ENCODE measurements at regions of chr15 and their contacts with region 1.

Region 1: DNA sequence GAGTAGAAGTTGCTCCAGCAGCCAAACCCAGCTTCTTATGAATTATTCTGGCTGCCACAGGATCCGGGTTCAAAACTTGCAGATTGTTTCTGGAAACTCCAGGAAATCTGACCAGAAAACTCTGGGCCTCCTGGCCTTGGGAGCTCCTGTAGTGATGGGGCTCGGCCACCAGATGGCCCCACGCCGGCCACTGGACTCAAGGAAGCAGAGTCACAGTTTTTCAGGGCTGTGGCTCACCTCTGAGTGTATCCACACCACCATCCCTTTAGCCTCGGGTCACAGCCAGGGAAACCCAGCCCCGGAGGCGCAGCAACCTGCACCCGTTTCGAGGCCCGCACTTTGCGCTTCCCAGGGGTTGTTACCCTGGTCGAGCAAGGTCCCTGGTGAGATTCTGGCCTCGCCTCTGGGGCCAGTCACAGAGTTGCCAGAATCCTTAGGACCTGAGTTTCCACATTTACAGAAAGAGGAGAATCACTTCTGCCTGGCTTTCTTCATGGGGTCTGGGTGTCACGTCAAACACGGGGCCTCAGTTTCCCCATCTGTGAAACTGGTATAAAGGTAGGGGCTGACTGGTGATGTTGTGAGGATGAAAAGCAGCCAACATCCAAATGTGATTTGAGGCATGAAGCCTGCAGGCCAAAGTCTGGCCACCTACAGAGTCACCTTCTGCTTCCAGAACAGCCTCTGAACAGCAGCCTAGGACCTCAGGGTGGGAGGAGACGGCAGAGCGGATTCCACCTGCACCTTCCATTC is 53.5 kb upstream of the LCTL start:
- DNase-seq: peak; percentile 56
- ATAC-seq: peak; percentile 51
- H3K4me3 ChIP-seq: no peak overlapping the region
- H3K4me3 Mint-ChIP-seq: no peak overlapping the region
- H3K27ac ChIP-seq: no peak overlapping the region
- H3K27ac Mint-ChIP-seq: no peak overlapping the region
- H3K4me1 ChIP-seq: peaks cover 25 to 28% of the 10 kb centered on the region in 2 donors
- H3K4me1 Mint-ChIP-seq: peaks cover 31% of the 10 kb centered on the region
- H3K27me3 ChIP-seq: peaks cover 0 to 31% (median 15%) of the 10 kb centered on the region in 4 experiments
- H3K27me3 Mint-ChIP-seq: peaks cover 33% of the 10 kb centered on the region
- CTCF ChIP-seq: peak; percentile 73

Region 2: GRCh38 chr15:66497502-66498455 is 121.5 kb before region 1 on chr15 and contains the start of gene SNAPC5:
- CTCF ChIA-PET with region 1: no interaction called
- POLR2A ChIA-PET with region 1: no interaction called
- intact Hi-C with region 1: no loop called
- DNase-seq: peak; percentile 97
- ATAC-seq: peak; percentile 93
- H3K4me3 ChIP-seq: peak within 1 kb of the TSS; percentile 88 to 94 (median 89)
- H3K4me3 Mint-ChIP-seq: peak within 1 kb of the TSS; percentile 94
- H3K27ac ChIP-seq: peak within 1 kb of the TSS; percentile 95 to 96
- H3K27ac Mint-ChIP-seq: peak within 1 kb of the TSS; percentile 93
- H3K4me1 ChIP-seq: peaks cover 17 to 27% of the 10 kb centered on the region in 2 donors
- H3K4me1 Mint-ChIP-seq: peaks cover 33% of the 10 kb centered on the region
- H3K27me3 ChIP-seq: no peaks in the 10 kb centered on the region
- H3K27me3 Mint-ChIP-seq: no peaks in the 10 kb centered on the region
- CTCF ChIP-seq: peak; percentile 99
- total RNA-seq, gene SNAPC5: 28.5 and 29.9 TPM in 2 replicates

Region 3: GRCh38 chr15:66588537-66588936 is 30.8 kb before region 1 on chr15:
- CTCF ChIA-PET with region 1: interaction called, 4 read pairs
- POLR2A ChIA-PET with region 1: no interaction called
- intact Hi-C with region 1: loop called (anchors 1 kb)
- DNase-seq: no peak
- ATAC-seq: no peak
- H3K4me3 ChIP-seq: no peak overlapping the region
- H3K4me3 Mint-ChIP-seq: no peak overlapping the region
- H3K27ac ChIP-seq: no peak overlapping the region
- H3K27ac Mint-ChIP-seq: no peak overlapping the region
- H3K4me1 ChIP-seq: no peaks in the 10 kb centered on the region
- H3K4me1 Mint-ChIP-seq: no peaks in the 10 kb centered on the region
- H3K27me3 ChIP-seq: peaks cover 0 to 19% (median 6%) of the 10 kb centered on the region in 4 experiments
- H3K27me3 Mint-ChIP-seq: peaks cover 16% of the 10 kb centered on the region
- CTCF ChIP-seq: no peak

Region 4: GRCh38 chr15:66700802-66701421 is 81.6 kb after region 1 on chr15:
- CTCF ChIA-PET with region 1: interaction called, 7 read pairs
- POLR2A ChIA-PET with region 1: no interaction called
- intact Hi-C with region 1: loop called (anchors 5 kb)
- DNase-seq: peak; percentile 88
- ATAC-seq: peak; percentile 84
- H3K4me3 ChIP-seq: peak overlapping the region; percentile 63 to 80 (median 77)
- H3K4me3 Mint-ChIP-seq: peak overlapping the region; percentile 94
- H3K27ac ChIP-seq: peak overlapping the region in 1 of 2 donors; percentile 47
- H3K27ac Mint-ChIP-seq: peak overlapping the region; percentile 85
- H3K4me1 ChIP-seq: peaks cover 17 to 27% of the 10 kb centered on the region in 2 donors
- H3K4me1 Mint-ChIP-seq: peaks cover 19% of the 10 kb centered on the region
- H3K27me3 ChIP-seq: peaks cover 0 to 34% (median 7%) of the 10 kb centered on the region in 4 experiments
- H3K27me3 Mint-ChIP-seq: peaks cover 17% of the 10 kb centered on the region
- CTCF ChIP-seq: no peak

Region 5: DNA sequence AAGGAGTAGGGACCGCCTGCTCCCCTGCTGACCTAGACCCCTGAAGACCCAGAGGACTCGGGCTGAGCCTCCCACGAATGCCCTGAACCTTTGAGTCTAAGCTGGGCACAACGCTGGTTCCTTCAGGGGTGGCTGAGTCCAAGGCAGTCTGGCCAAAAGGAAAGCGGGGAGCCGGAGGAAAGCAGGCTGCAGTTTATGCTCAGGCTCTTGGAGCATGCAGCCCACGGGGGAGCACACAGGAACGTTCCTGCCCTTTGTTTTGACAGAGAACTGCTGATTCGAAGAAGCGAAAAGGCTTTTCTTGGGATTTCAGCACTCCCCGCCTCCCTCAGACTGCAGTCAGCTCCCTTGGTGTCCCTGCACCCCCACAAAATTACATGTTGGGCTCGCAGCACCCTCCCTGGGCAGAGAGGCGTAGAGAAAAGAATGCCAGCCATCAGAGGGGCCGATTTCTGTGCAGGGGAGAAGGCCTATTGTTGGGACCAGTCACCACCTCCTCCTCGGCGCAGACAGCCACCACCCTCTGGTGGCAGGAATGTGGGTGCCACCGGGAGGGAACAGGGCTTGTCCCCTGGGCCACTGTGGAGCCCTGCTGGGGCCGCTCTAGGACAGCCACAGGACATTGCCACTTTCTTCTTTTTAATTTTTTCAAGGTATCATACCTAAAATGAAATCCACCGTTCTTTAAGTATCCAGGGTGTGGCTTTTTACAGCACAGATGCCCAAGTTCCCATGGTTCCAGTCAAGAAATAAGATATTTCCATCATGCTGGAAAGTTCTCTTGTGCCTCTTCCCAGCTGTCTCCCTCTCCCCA is 154.9 kb after region 1 on chr15:
- CTCF ChIA-PET with region 1: interaction called, 13 read pairs
- POLR2A ChIA-PET with region 1: no interaction called
- intact Hi-C with region 1: loop called (anchors 1 kb)
- DNase-seq: peak; percentile 63
- ATAC-seq: peak; percentile 67
- H3K4me3 ChIP-seq: no peak overlapping the region
- H3K4me3 Mint-ChIP-seq: no peak overlapping the region
- H3K27ac ChIP-seq: no peak overlapping the region
- H3K27ac Mint-ChIP-seq: no peak overlapping the region
- H3K4me1 ChIP-seq: no peaks in the 10 kb centered on the region
- H3K4me1 Mint-ChIP-seq: no peaks in the 10 kb centered on the region
- H3K27me3 ChIP-seq: no peaks in the 10 kb centered on the region
- H3K27me3 Mint-ChIP-seq: no peaks in the 10 kb centered on the region
- CTCF ChIP-seq: peak; percentile 70

Region 6: DNA sequence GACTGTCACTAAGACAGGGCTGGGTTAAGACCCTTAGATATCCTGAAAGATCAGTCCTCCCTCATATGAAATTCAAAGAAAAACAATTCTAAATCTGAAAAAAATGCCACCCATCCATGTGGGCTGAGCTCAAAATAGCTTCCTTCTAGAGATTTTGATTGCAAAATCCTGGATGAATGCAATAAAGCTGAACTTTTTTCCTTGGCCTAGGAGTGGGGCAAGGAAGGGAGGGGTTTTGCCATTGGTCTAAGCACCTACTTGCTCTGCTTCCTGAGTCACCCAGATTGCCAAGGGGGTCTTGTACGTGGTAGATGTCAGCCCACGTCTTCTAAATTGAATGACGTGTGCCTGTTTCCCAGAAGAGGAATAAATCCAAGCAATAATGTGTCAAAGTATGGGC is 430.7 kb after region 1 on chr15:
- CTCF ChIA-PET with region 1: no interaction called
- POLR2A ChIA-PET with region 1: no interaction called
- intact Hi-C with region 1: no loop called
- DNase-seq: no peak
- ATAC-seq: no peak
- H3K4me3 ChIP-seq: no peak overlapping the region
- H3K4me3 Mint-ChIP-seq: peak overlapping the region; percentile 9
- H3K27ac ChIP-seq: no peak overlapping the region
- H3K27ac Mint-ChIP-seq: peak overlapping the region; percentile 15
- H3K4me1 ChIP-seq: peaks cover 36 to 38% of the 10 kb centered on the region in 2 donors
- H3K4me1 Mint-ChIP-seq: peaks cover 44% of the 10 kb centered on the region
- H3K27me3 ChIP-seq: no peaks in the 10 kb centered on the region
- H3K27me3 Mint-ChIP-seq: no peaks in the 10 kb centered on the region
- CTCF ChIP-seq: no peak